A549 (cell line): ENCODE measurements at regions of chr17 and their contacts with region 1.

Region 1: GRCh38 chr17:4565209-4566141 is 5.1 kb upstream of the GGT6 start:
- DNase-seq: peak; percentile 92
- ATAC-seq: peak; percentile 90 to 92
- H3K4me3 ChIP-seq: no peak overlapping the region
- H3K27ac ChIP-seq: peak overlapping the region in 1 of 2 experiments; percentile 25; a peak in 1 of 6 replicates
- H3K4me1 ChIP-seq: 0 out of 3 replicates have a peak, but pooled peaks cover 4% of the 10 kb centered on the region
- CTCF ChIP-seq: peak; percentile 96
- EP300 ChIP-seq: no peak
- POLR2A ChIP-seq: no peak
- RAD21 ChIP-seq: peak; percentile 51 to 68

Region 2: DNA sequence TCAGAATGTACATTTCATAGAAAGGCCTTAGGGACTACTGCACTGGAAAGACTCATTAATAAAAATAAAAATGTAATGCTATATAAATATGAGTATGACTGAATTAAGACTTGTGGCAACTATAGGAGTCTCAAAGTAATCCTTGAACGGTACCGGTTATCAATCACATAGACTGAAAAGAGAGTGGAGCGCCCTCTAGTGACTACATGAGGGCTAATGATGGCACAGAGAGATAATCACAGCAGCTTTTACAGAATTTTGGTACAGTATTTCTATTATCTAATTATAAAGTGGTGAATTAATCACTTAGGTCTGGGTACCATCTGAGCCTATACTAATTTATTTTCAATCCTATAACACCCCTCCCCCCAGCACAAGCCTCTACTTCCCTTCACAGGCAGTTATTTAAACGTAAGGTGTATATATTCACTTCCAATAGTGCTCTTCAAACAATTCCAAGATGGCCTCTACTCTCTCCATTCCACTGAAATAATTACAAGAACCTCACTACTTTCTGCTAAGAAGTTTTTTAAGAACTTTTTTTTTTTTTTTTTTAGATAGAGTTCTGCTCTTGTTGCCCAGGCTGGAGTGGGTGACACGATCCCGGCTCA is 261.0 kb before region 1 on chr17:
- CTCF ChIA-PET with region 1: no interaction called
- POLR2A ChIA-PET with region 1: no interaction called
- DNase-seq: peak; percentile 52 to 74
- ATAC-seq: peak; percentile 90 to 92; a peak in 5 of 6 replicates
- H3K4me3 ChIP-seq: no peak overlapping the region
- H3K27ac ChIP-seq: no peak overlapping the region
- H3K4me1 ChIP-seq: peaks cover 8% of the 10 kb centered on the region; the same call in 2 of the 3 replicates
- CTCF ChIP-seq: peak; percentile 92
- EP300 ChIP-seq: no peak
- POLR2A ChIP-seq: no peak
- RAD21 ChIP-seq: peak; percentile 35 to 41; a peak in 3 of 5 replicates

Region 3: DNA sequence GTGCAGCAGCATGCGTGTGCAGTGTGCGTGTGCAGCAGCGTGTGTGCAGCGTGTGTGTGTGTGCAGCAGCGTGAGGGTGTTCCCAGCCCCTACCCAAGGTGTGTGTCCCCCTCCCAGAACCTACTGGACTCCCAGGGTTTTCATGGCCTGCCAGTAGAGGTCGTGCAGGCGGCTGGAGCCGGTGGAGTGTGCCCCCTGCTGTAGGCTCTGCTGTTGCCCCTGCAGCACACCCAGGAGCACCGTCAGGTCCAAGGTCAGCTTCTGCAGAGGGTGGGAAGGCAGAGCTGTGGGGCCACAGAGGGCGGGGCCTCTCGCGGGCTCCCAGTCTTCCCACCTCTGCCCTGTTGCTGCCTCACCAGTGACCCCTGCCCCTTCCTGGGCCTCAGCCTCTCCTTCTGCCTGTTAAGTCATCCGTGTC is 25.2 kb before region 1 on chr17:
- CTCF ChIA-PET with region 1: interaction called, 99 read pairs
- POLR2A ChIA-PET with region 1: no interaction called
- DNase-seq: no peak
- ATAC-seq: peak in 1 of 2 experiments; percentile 24; a peak in 3 of 6 replicates
- H3K4me3 ChIP-seq: no peak overlapping the region
- H3K27ac ChIP-seq: no peak overlapping the region
- H3K4me1 ChIP-seq: peaks cover 1% of the 10 kb centered on the region; the same call in 2 of the 3 replicates
- CTCF ChIP-seq: peak; percentile 36
- EP300 ChIP-seq: no peak
- POLR2A ChIP-seq: no peak
- RAD21 ChIP-seq: 0 out of 5 replicates have a peak, but pooled peaks of 1 of the 2 experiments have one; percentile 20

Region 4: GRCh38 chr17:4594931-4595684 is 29.6 kb after region 1 on chr17:
- CTCF ChIA-PET with region 1: interaction called, 186 read pairs
- POLR2A ChIA-PET with region 1: no interaction called
- DNase-seq: no peak
- ATAC-seq: no peak
- H3K4me3 ChIP-seq: no peak overlapping the region
- H3K27ac ChIP-seq: no peak overlapping the region
- H3K4me1 ChIP-seq: peaks cover 9% of the 10 kb centered on the region; the same call in 2 of the 3 replicates
- CTCF ChIP-seq: no peak
- EP300 ChIP-seq: no peak
- POLR2A ChIP-seq: no peak
- RAD21 ChIP-seq: no peak

Region 5: GRCh38 chr17:4625181-4625617 is 59.7 kb after region 1 on chr17:
- CTCF ChIA-PET with region 1: interaction called, 238 read pairs
- POLR2A ChIA-PET with region 1: interaction called, 3 read pairs
- DNase-seq: no peak
- ATAC-seq: peak in 1 of 2 experiments; percentile 47; a peak in 2 of 6 replicates
- H3K4me3 ChIP-seq: no peak overlapping the region
- H3K27ac ChIP-seq: no peak overlapping the region
- H3K4me1 ChIP-seq: no peaks in the 10 kb centered on the region
- CTCF ChIP-seq: no peak
- EP300 ChIP-seq: no peak
- POLR2A ChIP-seq: no peak
- RAD21 ChIP-seq: no peak

Region 6: GRCh38 chr17:4676791-4677190 is 111.3 kb after region 1 on chr17:
- CTCF ChIA-PET with region 1: interaction called, 15 read pairs
- POLR2A ChIA-PET with region 1: no interaction called
- DNase-seq: no peak
- ATAC-seq: no peak
- H3K4me3 ChIP-seq: no peak overlapping the region
- H3K27ac ChIP-seq: no peak overlapping the region
- H3K4me1 ChIP-seq: peaks cover 39% of the 10 kb centered on the region
- CTCF ChIP-seq: no peak
- EP300 ChIP-seq: no peak
- POLR2A ChIP-seq: no peak
- RAD21 ChIP-seq: no peak